B cell (primary cell): ENCODE measurements at regions of chr17 and their contacts with region 1.

Region 1: DNA sequence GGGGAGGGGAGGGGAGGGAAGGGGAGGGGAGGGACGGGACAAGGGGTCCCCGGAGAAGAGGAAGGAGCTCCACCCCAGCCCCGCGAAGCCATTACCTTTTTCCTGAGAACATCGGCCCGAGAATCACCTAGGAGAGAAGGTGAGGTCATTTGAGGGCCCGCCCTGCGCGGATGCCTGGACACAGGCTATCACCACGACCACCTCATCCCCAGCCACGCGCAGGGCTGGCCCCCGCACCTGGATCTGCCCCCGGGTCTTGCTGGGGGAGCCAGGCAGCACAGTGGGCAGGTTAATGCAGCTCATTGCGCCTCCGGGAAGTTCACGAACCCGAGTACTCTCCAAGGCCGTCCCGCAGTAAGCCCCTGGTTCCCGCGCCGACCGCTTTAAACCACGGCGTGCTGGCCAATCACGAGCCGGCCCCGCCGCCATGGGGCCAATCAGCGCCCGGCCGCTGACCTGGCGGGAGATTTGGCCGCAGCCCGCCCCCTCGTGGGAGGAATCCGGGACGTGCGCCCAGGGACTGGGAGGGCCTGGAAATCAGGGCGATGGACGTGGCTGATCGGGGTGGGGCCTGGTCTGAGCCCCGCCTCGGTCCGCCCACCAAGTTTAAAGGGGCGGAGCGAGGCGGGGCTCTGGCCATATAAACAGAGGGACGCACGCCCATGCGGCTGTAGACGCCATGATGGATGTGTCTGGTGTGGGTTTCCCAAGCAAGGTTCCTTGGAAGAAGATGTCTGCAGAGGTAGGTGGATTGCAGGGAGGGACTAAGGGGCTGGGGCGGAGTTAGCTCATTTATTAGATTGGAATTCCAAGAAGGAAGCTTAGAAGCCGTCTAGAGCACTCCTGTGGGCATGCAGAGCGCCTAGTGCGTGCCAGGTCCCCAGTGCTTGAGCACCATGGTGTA is at the starts of genes AFMID and TK1:
- DNase-seq: peak; percentile 89
- ATAC-seq: peak; percentile 95
- H3K4me3 ChIP-seq: peak within 1 kb of the TSS; percentile 31 to 77 (median 70)
- H3K4me3 Mint-ChIP-seq: peak within 1 kb of the TSS; percentile 91
- H3K27ac ChIP-seq: no peak within 1 kb of the TSS
- H3K27ac Mint-ChIP-seq: peak within 1 kb of the TSS; percentile 83
- H3K4me1 ChIP-seq: peaks cover 12 to 20% of the 10 kb centered on the region in 2 donors
- H3K4me1 Mint-ChIP-seq: peaks cover 14% of the 10 kb centered on the region
- H3K27me3 ChIP-seq: no peaks in the 10 kb centered on the region
- H3K27me3 Mint-ChIP-seq: no peaks in the 10 kb centered on the region
- CTCF ChIP-seq: peak; percentile 37
- total RNA-seq, gene AFMID: 18.2 and 23.3 TPM in 2 replicates
- total RNA-seq, gene TK1: 1.5 and 2.2 TPM in 2 replicates

Region 2: GRCh38 chr17:78140169-78140976 is 46.6 kb before region 1 on chr17:
- CTCF ChIA-PET with region 1: interaction called, 357 read pairs
- POLR2A ChIA-PET with region 1: interaction called, 432 read pairs
- intact Hi-C with region 1: loop called (anchors 1 kb)
- DNase-seq: peak; percentile 96
- ATAC-seq: peak; percentile 88
- H3K4me3 ChIP-seq: no peak overlapping the region
- H3K4me3 Mint-ChIP-seq: peak overlapping the region; percentile 46
- H3K27ac ChIP-seq: peak overlapping the region; percentile 43 to 51
- H3K27ac Mint-ChIP-seq: peak overlapping the region; percentile 73
- H3K4me1 ChIP-seq: peaks cover 71 to 94% of the 10 kb centered on the region in 2 donors
- H3K4me1 Mint-ChIP-seq: peaks cover 82% of the 10 kb centered on the region
- H3K27me3 ChIP-seq: no peaks in the 10 kb centered on the region
- H3K27me3 Mint-ChIP-seq: no peaks in the 10 kb centered on the region
- CTCF ChIP-seq: no peak

Region 3: DNA sequence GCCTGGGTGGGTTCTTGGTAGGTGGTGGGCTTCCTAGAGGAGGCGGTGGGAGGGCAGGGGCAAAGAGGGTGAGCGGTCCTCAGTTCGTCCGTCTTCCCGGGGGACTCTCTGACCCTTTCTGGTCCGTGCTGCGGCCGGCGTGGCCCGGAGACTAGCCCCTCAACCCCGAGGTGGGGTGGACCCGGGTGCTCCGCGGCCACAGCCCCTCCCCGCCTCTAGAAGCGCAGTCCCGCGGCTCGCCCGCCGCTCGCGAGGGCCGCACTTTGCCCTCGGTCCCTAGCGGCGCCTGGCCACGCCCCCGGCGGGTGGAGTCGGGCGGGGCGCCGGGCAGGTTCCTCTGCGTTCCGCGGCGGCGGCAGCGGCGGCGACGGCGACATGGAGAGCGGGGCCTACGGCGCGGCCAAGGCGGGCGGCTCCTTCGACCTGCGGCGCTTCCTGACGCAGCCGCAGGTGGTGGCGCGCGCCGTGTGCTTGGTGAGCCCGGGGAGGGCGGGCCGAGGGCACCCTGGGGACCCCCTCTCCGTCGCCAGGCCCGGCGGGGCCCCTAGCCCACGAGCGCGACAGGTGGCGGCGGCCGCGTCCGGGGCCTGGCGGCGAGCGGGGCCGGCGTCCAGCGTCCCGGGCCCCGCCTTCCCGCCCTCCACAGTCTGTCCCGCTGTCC is 18.6 kb before region 1 on chr17 and contains the start of gene SYNGR2:
- CTCF ChIA-PET with region 1: interaction called, 3 read pairs
- POLR2A ChIA-PET with region 1: interaction called, 12 read pairs
- intact Hi-C with region 1: loop called (anchors 2 kb)
- DNase-seq: peak; percentile 91
- ATAC-seq: peak; percentile 71
- H3K4me3 ChIP-seq: peak within 1 kb of the TSS; percentile 1 to 88 (median 74)
- H3K4me3 Mint-ChIP-seq: peak within 1 kb of the TSS; percentile 83
- H3K27ac ChIP-seq: peak within 1 kb of the TSS; percentile 93 to 97
- H3K27ac Mint-ChIP-seq: peak within 1 kb of the TSS; percentile 90
- H3K4me1 ChIP-seq: peaks cover 46 to 58% of the 10 kb centered on the region in 2 donors
- H3K4me1 Mint-ChIP-seq: peaks cover 51% of the 10 kb centered on the region
- H3K27me3 ChIP-seq: no peaks in the 10 kb centered on the region
- H3K27me3 Mint-ChIP-seq: no peaks in the 10 kb centered on the region
- CTCF ChIP-seq: no peak
- total RNA-seq, gene SYNGR2: 380 and 390 TPM in 2 replicates

Region 4: GRCh38 chr17:78210111-78210510 is 23.2 kb after region 1 on chr17:
- CTCF ChIA-PET with region 1: no interaction called
- POLR2A ChIA-PET with region 1: no interaction called
- intact Hi-C with region 1: no loop called
- DNase-seq: no peak
- ATAC-seq: no peak
- H3K4me3 ChIP-seq: no peak overlapping the region
- H3K4me3 Mint-ChIP-seq: no peak overlapping the region
- H3K27ac ChIP-seq: no peak overlapping the region
- H3K27ac Mint-ChIP-seq: no peak overlapping the region
- H3K4me1 ChIP-seq: peaks cover 4 to 8% of the 10 kb centered on the region in 2 donors
- H3K4me1 Mint-ChIP-seq: peaks cover 7% of the 10 kb centered on the region
- H3K27me3 ChIP-seq: no peaks in the 10 kb centered on the region
- H3K27me3 Mint-ChIP-seq: no peaks in the 10 kb centered on the region
- CTCF ChIP-seq: no peak

Region 5: GRCh38 chr17:78241277-78242023 is 54.5 kb after region 1 on chr17:
- CTCF ChIA-PET with region 1: interaction called, 4 read pairs
- POLR2A ChIA-PET with region 1: no interaction called
- intact Hi-C with region 1: loop called (anchors 1 kb)
- DNase-seq: no peak
- ATAC-seq: no peak
- H3K4me3 ChIP-seq: no peak overlapping the region
- H3K4me3 Mint-ChIP-seq: no peak overlapping the region
- H3K27ac ChIP-seq: peak overlapping the region in 1 of 2 donors; percentile 79
- H3K27ac Mint-ChIP-seq: peak overlapping the region; percentile 70
- H3K4me1 ChIP-seq: peaks cover 26 to 34% of the 10 kb centered on the region in 2 donors
- H3K4me1 Mint-ChIP-seq: peaks cover 45% of the 10 kb centered on the region
- H3K27me3 ChIP-seq: peaks cover 0 to 2% (median 0%) of the 10 kb centered on the region in 4 experiments
- H3K27me3 Mint-ChIP-seq: no peaks in the 10 kb centered on the region
- CTCF ChIP-seq: no peak